Activated naive CD4-positive, alpha-beta T cell treated with anti-CD3 and anti-CD28 coated beads for 36 hours (primary cell): ENCODE measurements at regions of chr4 and their contacts with region 1.

Region 1: GRCh38 chr4:68375667-68376559 is 26.0 kb upstream of the YTHDC1 start:
- DNase-seq: peak; percentile 64
- H3K4me3 Mint-ChIP-seq: peak overlapping the region; percentile 62
- H3K27ac Mint-ChIP-seq: no peak overlapping the region
- H3K4me1 Mint-ChIP-seq: peaks cover 12% of the 10 kb centered on the region
- H3K27me3 Mint-ChIP-seq: no peaks in the 10 kb centered on the region

Region 2: DNA sequence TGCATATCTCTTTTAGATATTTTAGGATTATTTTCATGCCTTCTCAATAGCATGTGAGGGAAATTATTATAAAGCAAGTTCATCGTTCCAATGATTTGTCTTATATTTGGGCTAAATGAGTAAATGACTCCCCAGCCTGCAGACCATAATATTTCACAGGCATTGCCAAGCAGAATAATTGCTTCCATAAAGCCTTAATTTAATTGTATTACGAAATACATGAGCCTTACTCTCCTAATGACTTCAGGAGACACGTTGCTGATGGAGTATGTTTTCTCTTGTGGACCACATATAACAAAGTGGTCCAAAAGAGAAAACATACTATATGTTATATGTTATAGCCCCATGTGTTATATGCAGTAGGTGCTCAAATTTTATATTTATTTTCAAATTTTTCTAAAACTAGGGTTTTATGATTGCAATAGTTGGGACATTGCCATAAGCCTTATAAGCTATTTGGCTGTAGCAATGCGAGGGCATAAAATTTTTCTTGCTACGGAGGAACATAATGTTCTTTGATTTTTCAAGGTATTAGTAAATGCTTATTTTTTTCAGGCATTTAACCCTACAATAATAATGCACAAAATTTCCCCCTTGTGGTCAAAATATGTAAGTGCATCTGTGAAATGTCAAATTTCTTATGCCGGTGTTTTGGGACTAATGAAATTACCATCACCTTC is 465.9 kb before region 1 on chr4:
- CTCF ChIA-PET with region 1: no interaction called
- intact Hi-C with region 1: loop called (anchors 10 kb)
- DNase-seq: no peak
- H3K4me3 Mint-ChIP-seq: no peak overlapping the region
- H3K27ac Mint-ChIP-seq: no peak overlapping the region
- H3K4me1 Mint-ChIP-seq: no peaks in the 10 kb centered on the region
- H3K27me3 Mint-ChIP-seq: peaks cover 2% of the 10 kb centered on the region

Region 3: GRCh38 chr4:67988991-67989390 is 386.9 kb before region 1 on chr4:
- CTCF ChIA-PET with region 1: no interaction called
- intact Hi-C with region 1: loop called (anchors 1 kb)
- DNase-seq: no peak
- H3K4me3 Mint-ChIP-seq: no peak overlapping the region
- H3K27ac Mint-ChIP-seq: no peak overlapping the region
- H3K4me1 Mint-ChIP-seq: peaks cover 2% of the 10 kb centered on the region
- H3K27me3 Mint-ChIP-seq: peaks cover 3% of the 10 kb centered on the region

Region 4: GRCh38 chr4:68259191-68259590 is 116.7 kb before region 1 on chr4:
- CTCF ChIA-PET with region 1: interaction called, 11 read pairs
- intact Hi-C with region 1: no loop called
- DNase-seq: no peak
- H3K4me3 Mint-ChIP-seq: no peak overlapping the region
- H3K27ac Mint-ChIP-seq: no peak overlapping the region
- H3K4me1 Mint-ChIP-seq: no peaks in the 10 kb centered on the region
- H3K27me3 Mint-ChIP-seq: peaks cover 7% of the 10 kb centered on the region

Region 5: DNA sequence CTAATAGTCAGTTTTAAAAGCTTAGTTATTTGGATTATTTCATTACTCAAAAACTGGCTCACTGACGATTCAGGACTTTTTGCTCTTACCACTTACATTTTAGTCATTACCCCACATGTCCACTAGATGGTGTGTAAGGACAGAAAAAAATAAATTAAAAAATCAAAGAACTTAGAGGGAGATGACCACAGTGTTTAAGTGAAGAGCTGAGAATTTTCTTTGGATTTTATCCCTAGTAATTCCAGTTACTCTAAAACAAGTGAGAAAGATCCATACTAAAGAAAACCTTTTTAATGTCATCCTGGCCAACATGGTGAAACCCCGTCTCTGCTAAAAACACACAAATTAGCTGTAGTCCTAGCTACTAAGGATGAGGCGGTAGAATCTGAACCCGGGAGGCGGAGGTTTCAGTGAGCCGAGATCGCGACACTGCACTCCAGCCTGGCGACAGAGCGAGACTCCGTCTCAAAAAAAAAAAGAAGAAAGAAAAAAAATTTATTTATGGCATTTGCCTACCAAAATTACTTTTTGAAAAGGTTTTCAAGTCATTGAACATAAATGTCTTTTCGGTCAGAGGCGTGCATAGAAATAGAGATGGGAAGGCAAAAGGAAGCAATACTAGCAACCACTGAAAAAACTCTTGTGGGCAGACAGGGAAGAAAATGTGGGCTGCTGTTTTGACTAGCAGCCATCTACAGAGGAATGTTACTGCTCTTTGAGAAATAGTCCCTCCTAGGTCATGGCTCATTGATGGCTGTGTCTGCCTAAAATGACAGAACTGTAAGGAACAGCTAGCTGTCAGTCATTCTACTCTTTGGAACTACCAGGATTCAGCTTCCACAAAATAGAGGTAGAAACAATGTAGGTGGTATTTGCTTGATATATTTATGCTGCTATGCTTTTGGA is 103.8 kb before region 1 on chr4:
- CTCF ChIA-PET with region 1: interaction called, 58 read pairs
- intact Hi-C with region 1: loop called (anchors 1 kb)
- DNase-seq: no peak
- H3K4me3 Mint-ChIP-seq: peak overlapping the region; percentile 30
- H3K27ac Mint-ChIP-seq: no peak overlapping the region
- H3K4me1 Mint-ChIP-seq: peaks cover 8% of the 10 kb centered on the region
- H3K27me3 Mint-ChIP-seq: peaks cover 6% of the 10 kb centered on the region